ENCODE measurements at regions of chr10 and their contacts with region 1.

Region 1: GRCh38 chr10:68848793-68849192 is 21.5 kb downstream of the STOX1 start:
- DNase-seq: no peak
- H3K4me3 ChIP-seq: no peak overlapping the region
- H3K27ac ChIP-seq: no peak overlapping the region
- H3K4me1 ChIP-seq: no peaks in the 10 kb centered on the region
- H3K27me3 ChIP-seq: no peaks in the 10 kb centered on the region
- CTCF ChIP-seq: no peak

Region 2: GRCh38 chr10:68826764-68827591 is 21.8 kb before region 1 on chr10 and contains the start of gene STOX1:
- CTCF ChIA-PET with region 1: interaction called, 12 read pairs
- POLR2A ChIA-PET with region 1: no interaction called
- intact Hi-C with region 1: no loop called
- DNase-seq: peak; percentile 73 to 81
- H3K4me3 ChIP-seq: peak within 1 kb of the TSS; percentile 89
- H3K27ac ChIP-seq: no peak within 1 kb of the TSS
- H3K4me1 ChIP-seq: 0 out of 2 replicates have a peak, but pooled peaks cover 13% of the 10 kb centered on the region
- H3K27me3 ChIP-seq: no peaks in the 10 kb centered on the region
- CTCF ChIP-seq: no peak
- total RNA-seq, gene STOX1: 3.9 and 4.4 TPM in 2 replicates

Measured in PC-9 (cell line).